K562 (cell line): ENCODE measurements at regions of chr11 and their contacts with region 1.

Region 1: DNA sequence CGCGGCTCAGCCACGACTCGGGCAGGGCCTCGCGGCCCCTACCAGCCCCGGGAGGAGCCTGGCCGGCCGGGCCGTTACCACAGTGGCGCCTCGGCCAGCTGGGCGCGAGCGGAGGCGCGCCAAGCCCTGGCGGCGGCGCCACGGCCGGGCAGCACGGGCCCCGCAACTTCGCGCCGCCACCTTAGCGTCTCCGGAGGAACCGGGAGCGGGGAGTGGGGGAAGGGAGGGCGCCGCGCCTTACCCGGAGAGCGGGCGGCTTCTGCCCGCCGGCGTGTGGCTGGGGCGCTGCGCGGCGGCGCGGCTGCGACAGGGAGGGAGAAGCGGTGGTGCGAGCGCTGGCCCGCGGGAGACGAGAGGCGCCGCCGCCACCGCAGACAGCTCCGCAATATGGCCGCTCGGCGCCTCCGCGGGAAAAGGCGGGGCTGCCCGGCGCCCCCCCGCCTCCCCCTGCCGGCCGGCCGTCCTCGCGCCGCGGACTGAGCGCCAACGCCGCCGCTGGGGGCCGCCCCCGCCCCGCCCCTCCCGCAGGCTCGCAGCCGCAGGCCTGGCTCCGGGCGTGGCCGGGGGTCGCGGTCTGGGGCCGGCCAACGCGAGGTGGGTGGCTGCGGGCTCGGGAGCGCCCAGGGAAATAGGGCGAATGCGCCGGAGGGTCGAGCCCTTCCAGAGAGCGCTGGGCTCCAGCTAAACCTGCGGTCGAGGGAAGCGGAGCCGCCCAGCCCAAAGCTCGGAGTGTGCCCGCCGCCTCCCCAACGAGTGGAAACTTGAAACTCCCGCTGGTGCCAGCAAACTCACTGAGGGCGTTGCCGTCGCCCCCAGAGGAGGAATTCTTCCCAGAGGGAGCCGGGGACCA is at the start of gene RDX:
- DNase-seq: peak; percentile 86 to 94 (median 94)
- ATAC-seq: peak; percentile 84
- H3K4me3 ChIP-seq: peak within 1 kb of the TSS; percentile 99
- H3K27ac ChIP-seq: peak within 1 kb of the TSS; percentile 96
- H3K4me1 ChIP-seq: peaks cover 13 to 25% of the 10 kb centered on the region in 2 experiments
- H3K27me3 ChIP-seq: no peaks in the 10 kb centered on the region
- CTCF ChIP-seq: peak in 2 of 3 experiments; percentile 10 to 19; a peak in 2 of 6 replicates
- EP300 ChIP-seq: no peak
- POLR2A ChIP-seq: peak; percentile 64
- RAD21 ChIP-seq: 0 out of 4 replicates have a peak, but pooled peaks of 1 of the 2 experiments have one; percentile 6
- polyA plus RNA-seq, gene RDX: 51.4 to 54.0 TPM

Region 2: GRCh38 chr11:110069158-110069737 is 227.2 kb before region 1 on chr11:
- CTCF ChIA-PET with region 1: no interaction called
- POLR2A ChIA-PET with region 1: no interaction called
- in situ Hi-C with region 1: no loop called
- intact Hi-C with region 1: loop called (anchors 5 kb)
- DNase-seq: peak in 2 of 4 experiments; percentile 55 to 80
- ATAC-seq: peak; percentile 83
- H3K4me3 ChIP-seq: no peak overlapping the region
- H3K27ac ChIP-seq: peak overlapping the region; percentile 80
- H3K4me1 ChIP-seq: peaks cover 4 to 37% of the 10 kb centered on the region in 2 experiments; a peak in 4 of 5 replicates
- H3K27me3 ChIP-seq: no peaks in the 10 kb centered on the region
- CTCF ChIP-seq: no peak
- EP300 ChIP-seq: peak; percentile 80
- POLR2A ChIP-seq: peak; percentile 38; the same call in 1 of the 2 replicates
- RAD21 ChIP-seq: no peak

Region 3: DNA sequence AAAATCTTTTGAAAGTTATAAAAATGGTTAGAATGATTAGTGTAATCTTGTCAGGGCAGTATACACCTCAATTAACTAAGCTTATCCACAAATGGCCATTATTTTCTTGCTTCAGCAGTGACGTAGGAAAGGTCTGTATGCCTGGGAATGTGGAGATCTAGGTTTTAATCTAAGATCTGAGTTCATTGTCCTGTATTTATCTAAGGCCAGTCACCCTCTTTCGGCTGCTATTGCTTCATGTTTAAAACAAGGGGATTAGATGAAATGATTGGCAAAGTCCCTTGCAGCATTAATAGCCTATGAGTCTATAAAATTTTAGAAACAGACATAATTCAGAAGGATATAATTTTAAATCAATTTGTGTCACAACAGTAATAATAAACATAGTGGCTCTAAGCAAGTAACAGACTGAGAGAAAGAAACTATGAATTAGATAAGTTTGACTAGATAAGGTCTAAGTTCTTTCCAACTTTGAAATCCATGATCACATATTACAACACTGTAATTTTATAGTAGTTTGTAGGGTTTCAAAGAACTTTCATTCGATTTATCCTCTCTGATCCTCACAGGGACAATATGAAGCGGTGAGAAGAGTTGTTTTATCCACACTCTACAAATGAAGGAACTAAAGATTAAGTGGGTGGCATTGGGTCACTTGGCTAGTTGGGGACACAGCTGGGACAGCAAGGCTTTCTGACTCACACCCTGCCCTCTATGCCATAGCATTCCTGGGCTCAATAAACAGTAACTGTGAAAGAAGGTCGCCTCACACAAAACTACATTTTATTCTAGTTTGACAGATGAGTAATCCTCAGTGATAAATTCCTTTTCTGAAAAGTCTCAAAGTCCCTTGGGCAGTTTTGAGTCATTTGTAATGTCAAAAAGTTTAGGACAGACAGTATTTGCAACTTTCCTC is 60.6 kb after region 1 on chr11:
- CTCF ChIA-PET with region 1: no interaction called
- POLR2A ChIA-PET with region 1: no interaction called
- in situ Hi-C with region 1: no loop called
- intact Hi-C with region 1: loop called (anchors 2 kb)
- DNase-seq: no peak
- ATAC-seq: no peak
- H3K4me3 ChIP-seq: no peak overlapping the region
- H3K27ac ChIP-seq: peak overlapping the region; percentile 32; the same call in 1 of the 3 replicates
- H3K4me1 ChIP-seq: no peaks in the 10 kb centered on the region; a peak in 2 of 5 replicates
- H3K27me3 ChIP-seq: peaks cover 0 to 5% of the 10 kb centered on the region in 2 experiments; a peak in 2 of 5 replicates
- CTCF ChIP-seq: no peak
- EP300 ChIP-seq: no peak
- POLR2A ChIP-seq: no peak
- RAD21 ChIP-seq: no peak

Region 4: DNA sequence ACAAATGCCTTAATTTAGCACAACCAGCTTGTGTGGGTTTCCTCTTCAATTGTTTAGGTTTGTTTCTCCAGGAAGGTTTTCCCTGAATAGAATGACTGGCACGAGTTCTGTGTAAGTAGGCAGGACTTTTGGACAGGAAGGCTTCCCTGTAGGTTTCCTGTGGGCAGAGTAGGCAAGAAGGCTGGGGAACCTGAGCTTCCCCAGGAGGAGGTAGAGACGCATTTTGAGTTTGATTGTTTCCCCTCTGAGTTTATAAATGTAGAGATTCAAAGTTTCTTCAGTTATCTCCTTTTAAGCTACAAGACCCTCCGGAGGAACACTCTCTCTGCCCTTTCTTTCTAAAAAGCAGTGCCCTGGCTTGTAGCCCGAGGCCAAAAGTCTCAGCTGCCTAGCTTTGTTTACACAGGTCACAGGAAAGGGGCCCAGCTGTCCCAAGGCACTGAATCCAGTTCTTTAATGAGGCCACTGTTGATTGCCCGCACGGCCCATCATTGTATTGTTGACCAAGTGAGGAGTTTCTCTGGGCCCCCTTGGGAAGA is 66.6 kb after region 1 on chr11:
- CTCF ChIA-PET with region 1: no interaction called
- POLR2A ChIA-PET with region 1: interaction called, 3 read pairs
- in situ Hi-C with region 1: no loop called
- intact Hi-C with region 1: loop called (anchors 2 kb)
- DNase-seq: no peak
- ATAC-seq: no peak; the same call in none of the 3 replicates
- H3K4me3 ChIP-seq: no peak overlapping the region
- H3K27ac ChIP-seq: no peak overlapping the region
- H3K4me1 ChIP-seq: no peaks in the 10 kb centered on the region
- H3K27me3 ChIP-seq: no peaks in the 10 kb centered on the region; a peak in 1 of 5 replicates
- CTCF ChIP-seq: no peak
- EP300 ChIP-seq: no peak
- POLR2A ChIP-seq: no peak
- RAD21 ChIP-seq: no peak

Region 5: DNA sequence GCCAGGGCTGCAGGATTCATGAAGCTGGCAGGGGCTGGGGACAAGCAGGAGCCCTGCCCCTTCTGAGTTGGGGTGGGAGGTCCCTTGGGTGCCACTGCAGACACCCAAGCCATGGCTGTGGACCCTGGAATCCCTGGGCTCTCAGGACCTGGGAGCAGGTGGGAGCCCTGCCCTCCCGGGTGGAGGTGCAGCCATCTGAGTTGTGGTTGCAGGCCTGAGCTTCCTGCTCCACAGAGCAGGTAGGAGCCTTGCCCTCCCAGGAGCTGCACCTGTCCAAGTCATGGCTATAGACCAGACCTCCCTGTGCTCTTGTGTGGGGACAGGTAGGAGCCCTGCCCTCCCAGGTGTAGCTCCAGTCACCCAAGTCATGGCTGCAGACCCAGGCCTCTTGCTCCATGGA is 302.3 kb after region 1 on chr11:
- CTCF ChIA-PET with region 1: no interaction called
- POLR2A ChIA-PET with region 1: no interaction called
- in situ Hi-C with region 1: no loop called
- intact Hi-C with region 1: no loop called
- DNase-seq: no peak
- ATAC-seq: no peak
- H3K4me3 ChIP-seq: no peak overlapping the region
- H3K27ac ChIP-seq: no peak overlapping the region
- H3K4me1 ChIP-seq: no peaks in the 10 kb centered on the region
- H3K27me3 ChIP-seq: no peaks in the 10 kb centered on the region
- CTCF ChIP-seq: no peak
- EP300 ChIP-seq: no peak
- POLR2A ChIP-seq: no peak
- RAD21 ChIP-seq: no peak